ENCODE measurements at regions of chr16 and their contacts with region 1.

Region 1: DNA sequence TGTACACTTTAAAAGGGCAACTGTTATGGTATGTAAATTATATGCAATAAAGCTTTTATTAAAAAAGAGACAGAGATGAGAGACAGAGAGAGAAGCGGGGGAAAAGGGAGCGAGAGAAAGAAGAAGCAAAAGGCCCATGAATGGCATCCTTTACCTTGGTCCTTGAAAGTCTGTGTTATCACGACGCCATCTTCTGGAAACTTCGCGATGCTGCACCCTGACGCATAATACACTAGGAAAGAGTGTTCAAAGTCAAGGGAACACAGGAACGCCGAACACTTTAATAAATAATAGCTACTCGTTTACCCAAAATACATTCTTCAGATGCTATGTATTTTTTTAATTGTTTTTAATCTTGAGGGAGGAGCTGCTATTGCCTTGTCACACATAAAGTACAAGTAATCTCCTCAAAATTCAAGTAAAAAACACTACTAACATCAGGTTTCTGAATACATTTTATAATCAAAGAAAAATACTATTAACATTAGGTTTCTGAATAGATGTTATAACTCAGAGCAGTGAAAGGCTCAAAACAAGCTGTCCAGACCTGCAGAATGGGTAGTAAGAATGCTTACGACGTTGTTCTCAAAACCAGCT is 23.0 kb upstream of the SLC38A8 start:
- DNase-seq: peak; percentile 40
- H3K4me3 Mint-ChIP-seq: no peak overlapping the region
- H3K27ac Mint-ChIP-seq: no peak overlapping the region
- H3K4me1 Mint-ChIP-seq: peaks cover 4% of the 10 kb centered on the region
- H3K27me3 Mint-ChIP-seq: no peaks in the 10 kb centered on the region

Region 2: DNA sequence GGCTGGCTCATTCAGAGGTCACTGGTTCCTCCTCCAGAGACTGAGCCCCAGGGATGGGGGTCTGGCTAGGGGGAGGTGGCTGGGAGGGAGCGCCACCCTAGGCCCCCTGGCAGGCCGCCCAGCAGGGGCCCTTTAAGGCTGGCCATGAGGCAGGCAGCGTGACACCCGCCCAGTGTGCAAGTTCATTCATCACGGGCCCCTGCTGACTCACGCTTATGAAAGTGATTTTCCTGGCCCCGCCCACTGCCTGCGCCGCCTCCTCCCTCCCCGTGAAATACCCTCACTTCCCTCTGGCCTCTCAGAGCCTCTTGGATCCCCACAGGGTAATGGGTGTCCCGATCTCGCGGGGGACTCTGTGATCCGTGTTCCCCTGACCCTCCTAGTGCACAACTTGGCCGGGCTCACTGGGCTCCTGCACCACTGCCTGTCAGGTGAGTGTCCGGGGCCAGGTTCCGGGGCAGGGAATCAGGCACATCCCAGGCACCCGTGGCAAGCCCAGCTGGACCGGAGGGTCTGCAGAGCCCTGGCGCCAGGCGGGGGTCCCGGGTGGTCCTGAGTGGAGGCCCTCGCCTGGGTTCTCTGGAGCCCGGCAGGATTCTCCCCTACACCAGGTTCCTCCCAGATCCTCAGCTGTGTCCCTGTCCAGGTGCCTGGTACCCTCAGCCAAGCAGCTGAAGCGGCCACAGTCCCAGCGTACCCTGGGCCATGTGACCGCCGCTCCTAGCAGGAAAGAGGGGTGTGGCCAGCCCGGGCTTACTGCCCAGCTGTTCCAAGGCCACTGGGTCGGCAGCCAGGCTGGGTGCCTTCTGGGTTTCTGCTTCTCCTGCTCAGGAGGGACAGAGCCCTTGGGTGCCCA is 112.5 kb before region 1 on chr16 and contains the start of gene OSGIN1:
- CTCF ChIA-PET with region 1: interaction called, 21 read pairs
- POLR2A ChIA-PET with region 1: interaction called, 3 read pairs
- DNase-seq: peak; percentile 79
- H3K4me3 Mint-ChIP-seq: peak within 1 kb of the TSS; percentile 72
- H3K27ac Mint-ChIP-seq: no peak within 1 kb of the TSS
- H3K4me1 Mint-ChIP-seq: peaks cover 8% of the 10 kb centered on the region
- H3K27me3 Mint-ChIP-seq: peaks cover 6% of the 10 kb centered on the region
- total RNA-seq, gene OSGIN1: 0.48 to 0.88 TPM

Region 3: GRCh38 chr16:84079664-84080063 is 14.0 kb after region 1 on chr16:
- CTCF ChIA-PET with region 1: interaction called, 11 read pairs
- POLR2A ChIA-PET with region 1: no interaction called
- DNase-seq: no peak
- H3K4me3 Mint-ChIP-seq: no peak overlapping the region
- H3K27ac Mint-ChIP-seq: no peak overlapping the region
- H3K4me1 Mint-ChIP-seq: peaks cover 1% of the 10 kb centered on the region
- H3K27me3 Mint-ChIP-seq: no peaks in the 10 kb centered on the region

Region 4: DNA sequence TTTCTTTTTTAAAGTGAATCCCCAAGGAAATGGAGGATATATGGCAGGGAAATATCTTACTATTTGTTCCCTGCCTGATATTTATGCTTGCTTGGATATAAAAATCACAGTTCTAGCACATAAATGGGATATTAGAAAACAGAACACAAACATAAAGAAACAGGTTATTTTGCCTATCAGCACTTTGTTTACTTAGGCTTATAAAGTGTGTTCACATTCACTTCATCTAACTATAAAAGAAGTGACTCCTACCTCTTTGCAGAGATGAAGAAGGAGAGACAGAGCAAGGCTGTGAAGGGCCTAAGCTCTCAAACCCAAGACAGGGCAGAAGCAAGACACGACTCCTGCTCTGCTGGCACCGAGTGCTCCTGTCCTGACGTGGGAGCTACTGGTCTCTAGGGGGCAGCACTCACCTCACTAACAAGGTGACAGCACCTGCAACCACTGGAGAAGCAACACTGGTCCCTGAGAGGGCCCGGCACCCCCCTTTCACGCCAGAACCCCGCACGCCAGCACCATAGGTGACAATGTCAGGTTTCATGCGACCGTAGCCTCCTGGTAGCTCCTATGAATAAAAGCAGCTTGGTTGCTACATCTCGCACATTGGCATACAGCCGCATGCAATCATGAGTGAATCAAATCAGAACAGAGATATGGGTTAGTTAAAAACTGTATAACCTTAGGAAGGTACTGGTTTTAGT is 19.1 kb after region 1 on chr16:
- CTCF ChIA-PET with region 1: interaction called, 11 read pairs
- POLR2A ChIA-PET with region 1: no interaction called
- DNase-seq: peak; percentile 76
- H3K4me3 Mint-ChIP-seq: no peak overlapping the region
- H3K27ac Mint-ChIP-seq: no peak overlapping the region
- H3K4me1 Mint-ChIP-seq: peaks cover 48% of the 10 kb centered on the region
- H3K27me3 Mint-ChIP-seq: no peaks in the 10 kb centered on the region

Region 5: DNA sequence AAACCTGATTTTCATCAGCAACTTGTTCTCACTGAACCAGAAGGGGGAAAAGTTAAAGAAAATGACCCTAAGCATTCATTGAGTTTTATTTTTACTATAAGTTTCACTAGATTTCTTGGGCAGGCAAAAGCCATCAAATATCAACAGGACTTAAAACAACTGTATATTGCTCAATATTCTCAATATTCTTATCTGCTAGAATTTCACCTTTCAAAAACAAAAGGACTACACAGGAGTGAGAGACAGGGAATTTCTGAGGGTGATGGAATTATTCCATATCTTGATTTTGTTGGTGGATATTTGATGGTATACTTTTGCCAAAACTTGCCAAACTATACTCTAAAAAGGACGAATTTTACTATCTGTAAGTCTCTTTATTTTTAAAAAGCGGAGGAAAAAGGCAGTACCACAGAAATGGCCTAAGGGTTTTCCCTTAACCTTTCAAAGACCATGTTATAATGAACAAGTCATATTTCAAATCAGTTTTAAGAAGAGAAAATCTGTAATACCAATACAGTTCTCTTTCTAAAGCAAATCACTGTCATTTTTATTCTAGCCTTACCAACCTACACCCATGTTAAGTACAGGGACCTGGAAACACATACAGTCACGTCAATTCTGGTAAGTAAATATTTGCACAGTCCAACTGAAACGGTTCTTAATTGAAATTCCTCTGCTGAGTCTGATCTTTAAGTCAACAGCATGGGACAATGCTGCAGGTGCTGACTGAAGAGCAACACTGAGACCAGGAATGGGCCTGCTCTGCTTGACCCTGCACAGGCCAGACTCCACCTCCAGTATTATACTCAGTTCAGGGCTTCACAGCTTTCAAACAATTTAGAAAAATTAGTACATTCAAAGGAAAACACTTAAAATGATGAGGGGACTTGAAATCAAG is 30.7 kb after region 1 on chr16:
- CTCF ChIA-PET with region 1: no interaction called
- POLR2A ChIA-PET with region 1: no interaction called
- DNase-seq: no peak
- H3K4me3 Mint-ChIP-seq: no peak overlapping the region
- H3K27ac Mint-ChIP-seq: no peak overlapping the region
- H3K4me1 Mint-ChIP-seq: peaks cover 10% of the 10 kb centered on the region
- H3K27me3 Mint-ChIP-seq: no peaks in the 10 kb centered on the region